ENCODE measurements at regions of chr12 and their contacts with region 1.

Region 1: GRCh38 chr12:57309420-57309819 is 58.4 kb upstream of the STAC3 start:
- DNase-seq: no peak
- H3K4me3 ChIP-seq: no peak overlapping the region
- H3K27ac ChIP-seq: no peak overlapping the region
- H3K4me1 ChIP-seq: no peaks in the 10 kb centered on the region
- H3K27me3 ChIP-seq: no peaks in the 10 kb centered on the region

Region 2: GRCh38 chr12:57319678-57320469 is 10.5 kb after region 1 on chr12:
- CTCF ChIA-PET with region 1: interaction called, 42 read pairs
- POLR2A ChIA-PET with region 1: no interaction called
- DNase-seq: no peak
- H3K4me3 ChIP-seq: no peak overlapping the region
- H3K27ac ChIP-seq: no peak overlapping the region
- H3K4me1 ChIP-seq: peaks cover 0 to 4% (median 0%) of the 10 kb centered on the region in 4 experiments
- H3K27me3 ChIP-seq: no peaks in the 10 kb centered on the region

Region 3: DNA sequence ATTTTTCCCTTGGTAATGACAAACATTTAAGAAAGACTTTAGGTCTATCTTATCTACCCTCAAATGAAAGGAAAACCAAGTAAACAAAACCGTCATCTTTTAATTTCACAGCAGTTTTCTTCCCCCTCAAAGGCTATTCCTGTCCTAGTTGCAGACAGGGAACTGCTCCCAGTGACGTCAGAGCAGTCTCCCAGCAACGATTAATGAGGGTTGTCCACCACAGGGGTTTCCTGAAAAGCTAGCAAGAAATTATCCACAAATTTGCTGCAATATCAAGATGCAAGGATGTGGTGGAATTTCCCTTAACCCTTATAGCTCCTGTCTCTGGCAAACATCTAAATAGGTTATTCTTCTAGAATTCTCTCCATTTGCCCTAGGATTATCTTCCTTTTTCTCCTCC is 30.7 kb after region 1 on chr12:
- CTCF ChIA-PET with region 1: interaction called, 15 read pairs
- POLR2A ChIA-PET with region 1: interaction called, 3 read pairs
- DNase-seq: peak; percentile 87
- H3K4me3 ChIP-seq: peak overlapping the region in 3 of 7 experiments; percentile 33 to 53 (median 52)
- H3K27ac ChIP-seq: peak overlapping the region; percentile 28 to 75
- H3K4me1 ChIP-seq: peaks cover 0 to 22% (median 9%) of the 10 kb centered on the region in 4 experiments
- H3K27me3 ChIP-seq: no peaks in the 10 kb centered on the region